IMR-90 (cell line): ENCODE measurements at regions of chr17 and their contacts with region 1.

Region 1: DNA sequence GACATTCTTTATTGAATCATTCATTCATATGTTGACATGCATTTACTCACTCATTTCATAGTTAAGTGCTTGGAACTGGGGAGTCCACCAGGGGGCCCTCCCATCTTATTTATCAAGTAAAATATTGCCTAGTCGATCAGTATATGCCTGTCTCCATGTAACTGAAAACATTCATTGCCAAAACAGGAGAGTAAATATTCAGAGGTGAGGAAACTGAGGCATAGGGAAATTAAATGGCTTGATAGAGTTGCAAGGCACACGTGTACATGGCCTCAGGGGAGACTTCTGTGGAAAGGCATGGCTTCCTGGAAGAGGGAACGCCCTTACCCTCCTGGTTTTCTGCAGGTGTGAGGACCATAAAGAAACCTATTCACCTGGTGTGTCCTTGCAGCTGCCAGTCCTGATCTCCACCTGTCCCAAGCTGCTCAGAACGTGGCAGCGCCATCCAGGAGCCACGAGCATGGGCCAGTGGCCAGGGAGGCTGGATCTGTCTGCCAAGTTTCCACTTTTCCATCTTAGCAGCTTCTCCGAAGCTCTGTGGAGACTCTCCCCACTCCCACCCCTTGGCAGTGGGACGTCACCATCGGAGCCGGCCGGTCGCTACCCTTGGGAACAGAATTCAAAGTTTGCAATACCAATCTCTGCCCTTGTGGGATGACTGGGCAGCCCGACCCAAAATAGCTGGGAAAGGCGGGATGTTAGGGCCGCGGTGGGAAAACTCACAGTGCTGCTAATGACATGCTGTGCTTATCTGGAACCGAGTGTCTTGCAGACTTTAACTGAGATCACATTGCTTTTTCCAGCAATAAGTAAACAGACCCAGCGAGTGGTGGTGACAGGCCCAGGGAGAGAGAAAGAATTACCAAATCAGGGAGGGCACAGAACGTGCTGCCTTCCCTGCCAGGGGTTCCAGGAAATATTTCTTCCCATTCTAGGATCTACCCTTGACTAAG is 4.1 kb upstream of the C1QTNF1 start:
- DNase-seq: peak; percentile 78
- ATAC-seq: peak; percentile 68
- H3K4me3 ChIP-seq: no peak overlapping the region
- H3K27ac ChIP-seq: no peak overlapping the region
- H3K4me1 ChIP-seq: peaks cover 15% of the 10 kb centered on the region
- H3K27me3 ChIP-seq: peaks cover 2% of the 10 kb centered on the region; the same call in 1 of the 2 replicates
- CTCF ChIP-seq: peak; percentile 89
- POLR2A ChIP-seq: no peak
- RAD21 ChIP-seq: peak; percentile 84

Region 2: GRCh38 chr17:79045842-79046196 is 25.9 kb after region 1 on chr17:
- CTCF ChIA-PET with region 1: interaction called, 19 read pairs
- POLR2A ChIA-PET with region 1: no interaction called
- dilution Hi-C with region 1: no loop called
- in situ Hi-C with region 1: no loop called
- intact Hi-C with region 1: loop called (anchors 1 kb)
- DNase-seq: peak; percentile 57
- ATAC-seq: peak; percentile 98
- H3K4me3 ChIP-seq: no peak overlapping the region
- H3K27ac ChIP-seq: no peak overlapping the region
- H3K4me1 ChIP-seq: no peaks in the 10 kb centered on the region
- H3K27me3 ChIP-seq: no peaks in the 10 kb centered on the region; the same call in 1 of the 2 replicates
- CTCF ChIP-seq: peak; percentile 95
- POLR2A ChIP-seq: no peak
- RAD21 ChIP-seq: peak; percentile 86

Region 3: DNA sequence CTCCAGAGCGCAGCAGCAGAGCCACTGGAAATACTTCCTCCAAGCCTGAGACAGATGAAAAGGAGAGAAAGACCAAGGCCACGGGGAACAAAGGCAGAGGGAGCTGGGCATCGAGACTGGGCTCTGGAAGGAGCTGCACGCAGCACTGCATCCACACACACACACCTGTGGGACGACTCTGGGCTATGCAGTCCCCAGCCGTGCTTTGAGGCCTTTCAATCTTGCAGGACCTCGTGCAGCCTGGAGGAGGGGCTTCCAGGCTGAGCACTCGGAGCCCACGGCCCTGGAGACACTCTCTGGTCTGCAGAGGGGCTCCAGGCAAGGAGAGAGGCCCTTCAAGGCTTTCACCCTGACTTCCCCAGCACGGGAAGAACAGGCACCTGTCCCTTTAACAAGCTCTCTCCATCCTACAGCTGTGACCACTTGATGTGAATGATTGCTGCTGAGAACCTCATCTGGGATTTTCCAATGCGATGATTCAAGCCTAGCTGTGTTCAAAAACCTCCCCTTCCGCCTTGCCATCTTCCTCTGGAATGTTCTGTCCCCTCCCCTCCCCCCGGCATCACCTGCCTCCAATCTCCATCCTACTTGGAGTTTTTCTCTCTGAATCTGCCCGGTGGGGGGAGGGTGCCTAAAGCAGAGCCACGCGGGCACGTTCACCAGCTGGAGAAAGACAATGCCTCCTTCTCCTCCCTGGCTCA is 553.4 kb after region 1 on chr17:
- CTCF ChIA-PET with region 1: no interaction called
- POLR2A ChIA-PET with region 1: no interaction called
- dilution Hi-C with region 1: no loop called
- in situ Hi-C with region 1: no loop called
- intact Hi-C with region 1: no loop called
- DNase-seq: no peak
- ATAC-seq: no peak
- H3K4me3 ChIP-seq: no peak overlapping the region
- H3K27ac ChIP-seq: no peak overlapping the region
- H3K4me1 ChIP-seq: no peaks in the 10 kb centered on the region
- H3K27me3 ChIP-seq: no peaks in the 10 kb centered on the region
- CTCF ChIP-seq: no peak
- POLR2A ChIP-seq: no peak
- RAD21 ChIP-seq: no peak